CD14-positive monocyte (primary cell): ENCODE measurements at regions of chr2 and their contacts with region 1.

Region 1: GRCh38 chr2:121736462-121737341 is at the start of gene NIFK:
- DNase-seq: peak; percentile 97 to 98 (median 98)
- H3K4me3 ChIP-seq: peak within 1 kb of the TSS; percentile 80 to 97 (median 90)
- H3K4me3 Mint-ChIP-seq: peak within 1 kb of the TSS; percentile 96 to 98
- H3K27ac ChIP-seq: peak within 1 kb of the TSS; percentile 72 to 97
- H3K27ac Mint-ChIP-seq: peak within 1 kb of the TSS; percentile 94 to 97 (median 96)
- H3K4me1 ChIP-seq: peaks cover 15 to 18% of the 10 kb centered on the region in 2 donors
- H3K4me1 Mint-ChIP-seq: peaks cover 35% of the 10 kb centered on the region
- H3K27me3 ChIP-seq: no peaks in the 10 kb centered on the region
- H3K27me3 Mint-ChIP-seq: peaks cover 0 to 6% (median 0%) of the 10 kb centered on the region in 3 donors
- CTCF ChIP-seq: no peak
- polyA plus RNA-seq, gene NIFK: 6.6 to 32.6 (median 30.6) TPM

Region 2: GRCh38 chr2:121611730-121612705 is 124.7 kb before region 1 on chr2:
- intact Hi-C with region 1: loop called in 1 of 2 experiments (anchors 5 kb)
- DNase-seq: peak; percentile 85 to 98 (median 88)
- H3K4me3 ChIP-seq: peak overlapping the region in 1 of 3 experiments; percentile 18
- H3K4me3 Mint-ChIP-seq: no peak overlapping the region
- H3K27ac ChIP-seq: peak overlapping the region; percentile 58 to 80
- H3K27ac Mint-ChIP-seq: no peak overlapping the region
- H3K4me1 ChIP-seq: peaks cover 0 to 2% of the 10 kb centered on the region in 2 donors
- H3K4me1 Mint-ChIP-seq: no peaks in the 10 kb centered on the region
- H3K27me3 ChIP-seq: no peaks in the 10 kb centered on the region
- H3K27me3 Mint-ChIP-seq: peaks cover 0 to 3% (median 0%) of the 10 kb centered on the region in 3 donors
- CTCF ChIP-seq: no peak

Region 3: DNA sequence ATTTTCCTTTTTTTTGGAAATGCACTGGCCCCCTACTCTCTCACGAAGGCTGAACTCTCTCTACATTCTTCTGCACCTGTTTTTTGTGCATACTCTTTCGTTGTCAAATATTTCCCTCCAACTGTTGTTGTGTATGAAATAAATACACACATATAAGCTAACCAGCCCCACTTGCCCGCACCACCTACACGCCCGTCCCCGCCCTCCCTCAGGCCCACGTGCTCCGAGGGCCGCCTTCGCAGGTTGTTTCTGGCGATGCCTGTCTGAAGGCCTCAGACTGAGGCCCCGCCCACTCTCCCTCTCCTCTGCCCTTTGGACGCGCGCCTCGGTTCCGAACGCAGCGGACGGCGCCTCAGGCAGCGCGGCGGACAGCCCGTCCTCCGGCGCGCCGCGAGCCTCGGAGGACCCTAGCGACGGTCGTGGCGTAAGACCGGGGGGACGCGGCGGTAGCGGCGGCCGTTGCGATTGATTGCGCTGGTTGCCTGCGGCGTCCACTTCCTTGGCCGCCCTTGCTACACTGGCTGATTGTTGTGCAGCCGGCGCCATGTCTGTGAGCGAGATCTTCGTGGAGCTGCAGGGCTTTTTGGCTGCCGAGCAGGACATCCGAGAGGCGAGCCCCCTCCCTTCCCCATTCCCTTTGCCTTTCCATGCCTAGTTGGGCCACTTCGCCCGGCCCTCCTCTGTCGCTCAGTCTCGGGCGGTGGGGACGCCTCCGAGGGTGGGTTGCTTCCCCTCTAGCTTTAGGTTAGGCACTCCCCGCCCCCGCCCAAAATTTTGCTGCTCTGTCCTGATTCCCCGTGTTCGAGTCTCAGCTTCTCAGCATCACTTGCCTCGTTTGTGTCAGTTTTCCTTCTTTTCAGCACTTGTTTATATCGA is 18.8 kb after region 1 on chr2 and contains the start of gene TSN:
- intact Hi-C with region 1: loop called (anchors 1 to 2 kb)
- DNase-seq: peak; percentile 95 to 99 (median 97)
- H3K4me3 ChIP-seq: peak within 1 kb of the TSS; percentile 88 to 97 (median 97)
- H3K4me3 Mint-ChIP-seq: peak within 1 kb of the TSS; percentile 94 to 95
- H3K27ac ChIP-seq: peak within 1 kb of the TSS; percentile 88 to 95
- H3K27ac Mint-ChIP-seq: peak within 1 kb of the TSS; percentile 90 to 96 (median 93)
- H3K4me1 ChIP-seq: peaks cover 19 to 26% of the 10 kb centered on the region in 2 donors
- H3K4me1 Mint-ChIP-seq: peaks cover 18% of the 10 kb centered on the region
- H3K27me3 ChIP-seq: no peaks in the 10 kb centered on the region
- H3K27me3 Mint-ChIP-seq: peaks cover 0 to 2% (median 0%) of the 10 kb centered on the region in 3 donors
- CTCF ChIP-seq: no peak
- polyA plus RNA-seq, gene TSN: 12.2 to 66.5 (median 65.5) TPM

Region 4: DNA sequence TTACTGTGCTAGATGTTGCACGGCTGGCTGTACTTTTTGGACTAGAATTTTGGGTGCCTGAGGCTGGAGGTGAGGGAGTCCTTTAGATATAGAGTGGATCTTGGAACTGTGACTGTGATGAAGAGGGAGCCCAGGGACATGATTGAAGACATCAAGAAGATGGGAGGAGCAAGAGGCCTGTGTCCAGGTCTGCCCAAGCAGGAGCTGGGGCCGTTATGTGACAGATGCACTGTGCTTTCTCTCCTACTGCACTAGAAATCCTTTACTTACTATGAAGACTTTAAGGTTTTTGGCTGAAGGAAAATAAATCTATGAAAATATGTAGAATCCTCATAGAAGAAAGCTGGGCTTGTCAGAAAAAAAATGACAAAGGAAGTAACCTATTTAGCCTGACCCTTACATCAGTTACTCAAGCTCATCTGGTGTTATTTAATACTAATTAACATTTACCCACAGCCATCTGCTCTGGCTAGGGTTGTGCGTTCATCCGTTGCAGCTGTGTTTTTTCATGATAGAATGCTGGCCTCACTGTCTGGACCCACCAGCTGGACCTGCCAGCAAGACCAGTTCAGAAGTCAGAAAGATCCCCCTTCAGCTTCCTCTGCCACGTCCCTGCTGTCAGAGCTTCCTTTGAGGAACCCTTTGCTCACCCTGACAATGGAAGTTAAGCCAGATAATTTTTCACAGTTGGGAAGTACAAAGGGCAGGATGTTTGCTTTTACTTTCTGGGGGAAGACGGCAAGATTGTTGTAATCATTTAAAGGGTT is 35.5 kb after region 1 on chr2:
- intact Hi-C with region 1: no loop called
- DNase-seq: no peak
- H3K4me3 ChIP-seq: no peak overlapping the region
- H3K4me3 Mint-ChIP-seq: no peak overlapping the region
- H3K27ac ChIP-seq: no peak overlapping the region
- H3K27ac Mint-ChIP-seq: peak overlapping the region in 3 of 7 donors; percentile 2 to 51 (median 33)
- H3K4me1 ChIP-seq: no peaks in the 10 kb centered on the region
- H3K4me1 Mint-ChIP-seq: peaks cover 4% of the 10 kb centered on the region
- H3K27me3 ChIP-seq: no peaks in the 10 kb centered on the region
- H3K27me3 Mint-ChIP-seq: peaks cover 0 to 1% (median 0%) of the 10 kb centered on the region in 3 donors
- CTCF ChIP-seq: no peak